Psoas muscle (tissue), 8 donors: ENCODE measurements at regions of chr10 and their contacts with region 1.

Region 1: DNA sequence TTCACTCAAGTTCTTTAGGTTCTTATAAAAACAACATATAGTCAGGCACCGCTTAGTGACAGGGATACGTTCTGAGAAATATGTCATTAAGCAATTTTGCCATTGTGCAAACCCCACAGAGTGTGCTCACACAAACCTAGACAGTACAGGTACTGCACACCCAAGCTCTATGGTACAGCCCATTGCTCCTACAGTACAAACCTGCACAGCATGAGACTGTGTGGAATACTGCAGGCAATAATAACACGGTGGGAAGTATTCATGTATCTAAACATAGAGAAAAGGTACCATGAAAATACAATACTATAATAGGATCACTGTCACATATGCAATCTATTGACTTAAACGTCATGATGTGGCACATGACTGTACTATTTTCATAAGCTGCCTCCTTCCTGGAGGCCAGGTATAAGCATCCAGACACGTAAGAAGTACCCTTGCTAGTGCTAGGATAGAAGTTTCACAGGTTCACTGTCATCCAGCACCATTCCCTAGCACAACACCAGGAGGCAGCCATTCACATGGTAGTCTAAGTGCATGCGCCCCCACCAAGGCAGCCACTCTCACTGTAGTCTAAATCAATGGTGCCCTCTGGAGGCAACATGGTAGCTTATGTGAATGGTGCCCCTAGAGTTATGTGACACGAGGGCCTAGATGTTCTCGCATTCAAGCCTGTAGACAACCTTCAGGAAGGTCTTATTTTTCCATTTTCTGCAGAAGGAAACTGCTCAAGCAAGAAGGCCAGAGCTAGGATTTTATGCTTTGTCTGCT is 98.5 kb downstream of the ARHGAP22 start:
- DNase-seq: no peak
- ATAC-seq: no peak
- H3K4me3 ChIP-seq: no peak overlapping the region
- H3K27ac ChIP-seq: no peak overlapping the region
- H3K4me1 ChIP-seq: no peaks in the 10 kb centered on the region
- H3K27me3 ChIP-seq: no peaks in the 10 kb centered on the region
- CTCF ChIP-seq: peak; percentile 21

Region 2: GRCh38 chr10:48215488-48216204 is 290.7 kb before region 1 on chr10:
- intact Hi-C with region 1: loop called in 1 of 2 experiments (anchors 10 kb)
- DNase-seq: no peak
- ATAC-seq: no peak
- H3K4me3 ChIP-seq: no peak overlapping the region
- H3K27ac ChIP-seq: no peak overlapping the region
- H3K4me1 ChIP-seq: no peaks in the 10 kb centered on the region
- H3K27me3 ChIP-seq: peaks cover 0 to 3% (median 0%) of the 10 kb centered on the region in 3 donors
- CTCF ChIP-seq: peak; percentile 30

Region 3: GRCh38 chr10:48363617-48364355 is 142.5 kb before region 1 on chr10:
- intact Hi-C with region 1: loop called (anchors 2 to 10 kb)
- DNase-seq: peak in 1 of 2 donors; percentile 12
- ATAC-seq: peak; percentile 61 to 89 (median 65)
- H3K4me3 ChIP-seq: no peak overlapping the region
- H3K27ac ChIP-seq: no peak overlapping the region
- H3K4me1 ChIP-seq: peaks cover 45% of the 10 kb centered on the region
- H3K27me3 ChIP-seq: no peaks in the 10 kb centered on the region
- CTCF ChIP-seq: peak; percentile 76

Region 4: GRCh38 chr10:48701139-48701901 is 195.0 kb after region 1 on chr10:
- intact Hi-C with region 1: no loop called
- DNase-seq: no peak
- ATAC-seq: no peak
- H3K4me3 ChIP-seq: no peak overlapping the region
- H3K27ac ChIP-seq: no peak overlapping the region
- H3K4me1 ChIP-seq: no peaks in the 10 kb centered on the region
- H3K27me3 ChIP-seq: peaks cover 0 to 6% (median 0%) of the 10 kb centered on the region in 3 donors
- CTCF ChIP-seq: no peak